ENCODE measurements at regions of chr11 and their contacts with region 1.

Region 1: DNA sequence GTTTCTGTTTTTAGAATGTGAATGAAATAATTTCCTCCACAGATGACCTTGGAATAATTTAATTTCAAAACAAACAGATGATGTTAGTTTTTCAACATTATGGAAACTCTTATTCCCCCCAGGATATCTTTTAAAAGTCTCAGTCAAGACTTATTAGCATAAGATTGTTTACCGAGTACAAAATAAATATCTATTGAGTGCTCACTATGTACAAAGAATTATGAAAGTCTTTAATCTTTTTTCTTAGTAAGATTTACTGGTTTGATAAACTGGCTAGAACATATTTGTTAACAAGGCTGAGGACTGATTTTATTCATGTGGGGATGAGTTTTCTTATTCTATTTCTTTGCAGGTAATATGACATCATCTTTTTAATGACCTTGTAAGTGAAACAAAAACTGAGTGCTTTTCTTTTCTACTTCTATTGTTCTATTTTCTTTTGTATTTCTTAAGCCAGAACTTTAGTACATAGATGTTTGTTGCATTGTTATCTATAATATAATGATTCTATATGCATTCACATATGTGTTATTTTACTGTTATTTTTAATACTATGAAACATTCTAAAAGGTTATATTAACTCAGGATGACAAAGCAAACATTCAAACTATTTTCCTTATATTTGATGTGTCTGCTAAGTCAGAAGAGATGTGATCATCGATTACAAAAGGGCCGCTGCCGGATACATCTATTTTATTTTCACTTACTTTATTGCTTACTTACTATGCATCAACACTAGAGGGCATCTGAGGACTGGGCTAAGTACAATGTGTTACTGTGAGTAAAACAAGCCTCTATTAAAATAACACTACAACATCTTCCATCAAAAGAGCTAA is 111.0 kb upstream of the ARHGAP42 start:
- DNase-seq: no peak
- ATAC-seq: peak; percentile 67 to 73

Region 2: GRCh38 chr11:100681064-100681502 is 105.0 kb after region 1 on chr11:
- intact Hi-C with region 1: loop called in 1 of 2 experiments (anchors 5 kb)
- DNase-seq: peak; percentile 46
- ATAC-seq: peak; percentile 38 to 60

Region 3: DNA sequence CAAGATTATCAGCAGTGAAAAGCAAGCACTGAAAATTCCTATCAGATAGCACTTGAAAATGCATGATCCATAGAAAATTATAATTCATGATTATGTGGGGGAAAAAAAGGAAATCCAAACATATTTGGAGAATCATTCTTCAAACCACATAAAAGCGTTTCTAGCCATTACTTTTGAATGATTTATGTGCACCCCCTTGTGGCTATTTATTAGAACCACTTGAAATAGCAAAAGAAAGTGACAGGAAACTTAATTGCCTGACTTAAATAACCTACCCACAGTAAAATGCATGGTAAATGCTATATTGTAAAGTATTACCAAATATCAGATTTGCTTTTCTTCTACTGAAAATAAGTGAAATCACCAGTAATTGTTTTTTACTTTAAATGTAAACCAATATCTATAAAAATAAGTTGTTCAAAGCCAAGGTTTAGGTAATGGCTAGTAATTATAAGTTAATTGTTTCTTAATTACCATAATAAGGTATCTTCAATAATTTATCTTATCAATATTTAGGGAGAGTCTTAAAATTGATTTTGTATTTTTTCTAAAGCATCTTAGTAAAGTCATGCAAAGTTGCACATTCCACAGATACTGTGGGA is 279.5 kb after region 1 on chr11:
- intact Hi-C with region 1: loop called (anchors 2 to 5 kb)
- DNase-seq: no peak
- ATAC-seq: no peak

Measured in left cardiac atrium (tissue), 4 donors.